ENCODE measurements at regions of chr10 and their contacts with region 1.

Region 1: GRCh38 chr10:100433253-100434240 is 29.3 kb upstream of the WNT8B start:
- DNase-seq: peak; percentile 74 to 94
- ATAC-seq: peak; percentile 92 to 98
- H3K4me3 ChIP-seq: no peak overlapping the region
- H3K27ac ChIP-seq: peak overlapping the region in 1 of 2 experiments; percentile 9; a peak in 4 of 6 replicates
- H3K4me1 ChIP-seq: peaks cover 32% of the 10 kb centered on the region
- CTCF ChIP-seq: peak; percentile 100
- EP300 ChIP-seq: no peak
- POLR2A ChIP-seq: no peak
- RAD21 ChIP-seq: peak; percentile 100

Region 2: DNA sequence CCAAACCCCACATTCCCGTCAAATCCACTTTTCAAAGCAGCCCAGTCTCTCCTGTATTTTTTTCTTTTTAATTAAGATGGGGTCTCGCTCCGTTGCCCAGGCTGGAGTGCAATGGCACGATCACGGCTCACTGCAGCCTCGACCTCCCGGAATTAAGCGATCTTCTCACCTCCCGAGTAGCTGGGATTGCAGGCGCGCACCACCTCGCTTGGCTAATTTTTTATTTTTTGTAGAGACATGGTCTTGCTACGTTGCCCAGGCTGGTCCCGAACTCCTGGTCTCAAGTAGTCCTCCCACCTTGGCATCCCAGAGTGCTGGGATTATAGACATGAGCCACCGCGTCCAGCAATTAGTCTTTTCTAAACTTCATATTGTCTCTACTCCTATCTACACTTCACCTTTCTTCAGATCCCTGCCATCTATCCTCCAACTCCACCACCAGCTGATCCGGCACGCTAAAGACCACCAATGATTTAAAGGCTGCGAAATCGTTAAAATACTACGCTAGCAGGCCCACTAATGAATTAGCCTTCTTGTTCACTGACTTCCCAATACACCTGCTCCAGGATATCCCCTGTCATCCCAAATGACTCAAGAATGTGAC is 203.6 kb before region 1 on chr10:
- CTCF ChIA-PET with region 1: no interaction called
- POLR2A ChIA-PET with region 1: no interaction called
- DNase-seq: no peak
- ATAC-seq: no peak; a peak in 1 of 6 replicates
- H3K4me3 ChIP-seq: peak overlapping the region; percentile 91
- H3K27ac ChIP-seq: peak overlapping the region; percentile 88 to 93
- H3K4me1 ChIP-seq: peaks cover 14% of the 10 kb centered on the region; the same call in 2 of the 3 replicates
- CTCF ChIP-seq: no peak
- EP300 ChIP-seq: no peak
- POLR2A ChIP-seq: no peak
- RAD21 ChIP-seq: no peak

Region 3: DNA sequence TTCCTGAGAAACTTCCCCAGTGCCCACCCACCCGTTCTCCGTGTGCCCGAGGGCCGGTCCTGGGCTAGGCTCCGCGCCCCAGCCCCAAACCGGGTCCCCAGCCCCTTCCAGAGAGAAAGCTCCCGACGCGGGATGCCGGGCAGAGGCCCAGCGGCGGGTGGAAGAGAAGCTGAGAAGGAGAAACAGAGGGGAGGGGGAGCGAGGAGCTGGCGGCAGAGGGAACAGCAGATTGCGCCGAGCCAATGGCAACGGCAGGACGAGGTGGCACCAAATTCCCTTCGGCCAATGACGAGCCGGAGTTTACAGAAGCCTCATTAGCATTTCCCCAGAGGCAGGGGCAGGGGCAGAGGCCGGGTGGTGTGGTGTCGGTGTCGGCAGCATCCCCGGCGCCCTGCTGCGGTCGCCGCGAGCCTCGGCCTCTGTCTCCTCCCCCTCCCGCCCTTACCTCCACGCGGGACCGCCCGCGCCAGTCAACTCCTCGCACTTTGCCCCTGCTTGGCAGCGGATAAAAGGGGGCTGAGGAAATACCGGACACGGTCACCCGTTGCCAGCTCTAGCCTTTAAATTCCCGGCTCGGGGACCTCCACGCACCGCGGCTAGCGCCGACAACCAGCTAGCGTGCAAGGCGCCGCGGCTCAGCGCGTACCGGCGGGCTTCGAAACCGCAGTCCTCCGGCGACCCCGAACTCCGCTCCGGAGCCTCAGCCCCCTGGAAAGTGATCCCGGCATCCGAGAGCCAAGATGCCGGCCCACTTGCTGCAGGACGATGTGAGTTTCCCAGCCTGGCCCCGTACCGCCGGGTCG is 86.6 kb before region 1 on chr10 and contains the start of gene SCD:
- CTCF ChIA-PET with region 1: interaction called, 534 read pairs
- POLR2A ChIA-PET with region 1: interaction called, 11 read pairs
- DNase-seq: peak; percentile 93 to 98
- ATAC-seq: peak; percentile 91 to 93
- H3K4me3 ChIP-seq: peak within 1 kb of the TSS; percentile 99
- H3K27ac ChIP-seq: peak within 1 kb of the TSS; percentile 99
- H3K4me1 ChIP-seq: peaks cover 60% of the 10 kb centered on the region
- CTCF ChIP-seq: no peak
- EP300 ChIP-seq: peak in 1 of 2 experiments; percentile 18; a peak in 1 of 5 replicates
- POLR2A ChIP-seq: peak; percentile 71
- RAD21 ChIP-seq: 0 out of 5 replicates have a peak, but pooled peaks have one; percentile 1 to 8
- polyA plus RNA-seq, gene SCD: 329 and 348 TPM in 2 replicates

Region 4: DNA sequence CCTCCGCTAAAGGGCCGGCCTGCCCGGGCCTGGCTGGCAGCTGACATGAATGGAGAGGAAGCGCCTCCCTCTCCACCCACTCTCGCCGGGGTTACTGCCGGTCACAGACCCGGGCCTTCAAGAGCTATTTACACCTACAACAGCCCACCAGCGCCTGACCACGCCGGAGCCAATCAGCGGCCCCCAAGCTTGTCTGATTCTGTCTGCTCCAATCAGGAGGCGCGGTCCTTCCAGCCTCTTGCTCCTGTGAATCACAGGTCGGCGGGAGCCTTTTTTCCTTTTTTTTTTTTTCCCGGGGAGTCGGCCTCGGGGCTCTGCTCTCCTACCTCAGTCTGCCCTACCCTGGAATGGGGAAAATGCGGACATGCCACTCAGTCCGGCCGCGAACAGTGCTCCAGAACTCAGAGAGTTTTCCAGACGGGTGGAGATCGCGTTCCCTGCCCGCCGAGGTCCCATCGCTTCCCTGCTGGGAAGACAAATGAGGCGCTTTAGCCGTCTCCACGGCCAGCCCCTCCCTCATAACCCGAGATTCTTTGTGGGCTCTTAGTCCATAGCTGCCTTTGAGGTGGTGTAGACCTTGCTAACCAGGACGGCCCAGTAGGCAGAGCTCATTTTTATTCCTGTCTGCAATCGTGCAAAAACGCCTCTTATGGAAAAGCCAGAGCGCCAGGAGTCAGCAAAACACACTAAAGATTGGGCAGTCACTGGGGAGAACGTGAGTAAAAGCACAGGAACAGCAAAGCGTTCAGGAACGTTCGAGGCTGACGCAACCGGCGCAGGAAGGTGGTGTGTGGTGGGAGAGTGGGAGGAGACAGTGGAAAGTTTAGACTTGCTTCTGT is 60.0 kb before region 1 on chr10:
- CTCF ChIA-PET with region 1: interaction called, 24 read pairs
- POLR2A ChIA-PET with region 1: interaction called, 10 read pairs
- DNase-seq: peak; percentile 99 to 100
- ATAC-seq: peak; percentile 88 to 92
- H3K4me3 ChIP-seq: peak overlapping the region; percentile 43
- H3K27ac ChIP-seq: peak overlapping the region; percentile 97 to 98
- H3K4me1 ChIP-seq: peaks cover 61% of the 10 kb centered on the region
- CTCF ChIP-seq: no peak
- EP300 ChIP-seq: peak in 1 of 2 experiments; percentile 30; a peak in 1 of 5 replicates
- POLR2A ChIP-seq: peak; percentile 45
- RAD21 ChIP-seq: peak in 1 of 2 experiments; percentile 53; a peak in 2 of 5 replicates

Region 5: DNA sequence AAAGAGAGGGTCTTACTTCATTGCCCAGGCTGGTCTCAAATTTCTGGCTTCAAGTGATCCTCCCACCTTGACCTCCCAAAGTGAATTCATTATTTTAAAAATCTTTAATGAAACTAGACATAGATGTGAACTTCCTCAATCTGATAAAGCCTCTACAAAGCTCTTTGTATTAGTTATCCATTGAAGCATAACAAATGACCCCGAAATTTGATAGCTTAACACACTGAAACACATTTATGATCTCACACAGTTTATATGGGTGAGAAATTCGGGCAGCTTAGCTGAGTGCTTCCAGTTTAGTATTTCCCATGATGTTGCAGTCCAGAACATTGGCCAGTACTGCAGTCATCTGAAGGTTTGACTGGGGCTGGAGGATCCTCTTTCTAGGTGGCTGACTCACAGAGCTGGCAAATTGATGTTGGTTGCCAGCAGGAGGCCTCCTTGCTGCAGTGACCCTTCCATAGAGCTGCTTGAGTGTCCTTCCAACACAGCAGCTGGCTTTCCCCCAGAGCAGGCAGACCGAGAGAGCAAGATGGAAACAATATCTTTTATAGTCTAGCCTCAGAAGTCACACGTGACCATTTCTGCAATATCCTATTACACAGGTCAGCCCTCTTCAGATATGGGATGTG is 12.7 kb after region 1 on chr10:
- CTCF ChIA-PET with region 1: interaction called, 28 read pairs
- POLR2A ChIA-PET with region 1: no interaction called
- DNase-seq: peak in 1 of 2 experiments; percentile 32
- ATAC-seq: peak; percentile 54 to 64; a peak in 5 of 6 replicates
- H3K4me3 ChIP-seq: no peak overlapping the region
- H3K27ac ChIP-seq: no peak overlapping the region
- H3K4me1 ChIP-seq: no peaks in the 10 kb centered on the region
- CTCF ChIP-seq: no peak
- EP300 ChIP-seq: no peak
- POLR2A ChIP-seq: no peak
- RAD21 ChIP-seq: 0 out of 5 replicates have a peak, but pooled peaks of 1 of the 2 experiments have one; percentile 14

Region 6: GRCh38 chr10:100481462-100482081 is 48.0 kb after region 1 on chr10:
- CTCF ChIA-PET with region 1: interaction called, 40 read pairs
- POLR2A ChIA-PET with region 1: no interaction called
- DNase-seq: peak; percentile 89 to 92
- ATAC-seq: peak; percentile 94 to 97
- H3K4me3 ChIP-seq: peak overlapping the region; percentile 44
- H3K27ac ChIP-seq: no peak overlapping the region
- H3K4me1 ChIP-seq: 0 out of 3 replicates have a peak, but pooled peaks cover 3% of the 10 kb centered on the region
- CTCF ChIP-seq: no peak
- EP300 ChIP-seq: no peak
- POLR2A ChIP-seq: no peak
- RAD21 ChIP-seq: no peak

Region 7: DNA sequence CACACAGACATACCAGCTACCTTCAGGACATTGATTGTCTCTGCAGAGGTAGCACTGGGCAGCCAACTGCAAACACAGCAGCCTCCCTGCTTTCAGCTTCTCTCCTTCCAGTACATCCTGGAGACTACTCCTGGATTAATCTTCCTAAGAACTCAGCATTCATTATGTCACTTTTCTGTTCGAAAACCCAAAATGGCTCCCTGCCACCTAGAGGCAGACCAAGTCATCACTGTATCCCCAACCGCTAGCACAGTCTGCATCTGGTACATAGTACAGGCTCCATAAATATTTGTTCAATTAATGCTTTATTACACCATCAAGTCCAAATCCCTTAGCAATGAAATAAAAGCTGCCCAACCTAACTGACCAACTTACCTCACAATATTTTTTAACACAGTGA is 91.1 kb after region 1 on chr10:
- CTCF ChIA-PET with region 1: interaction called, 267 read pairs
- POLR2A ChIA-PET with region 1: no interaction called
- DNase-seq: no peak
- ATAC-seq: peak; percentile 24 to 48; a peak in 1 of 6 replicates
- H3K4me3 ChIP-seq: no peak overlapping the region
- H3K27ac ChIP-seq: no peak overlapping the region
- H3K4me1 ChIP-seq: peaks cover 7% of the 10 kb centered on the region; the same call in 2 of the 3 replicates
- CTCF ChIP-seq: no peak
- EP300 ChIP-seq: no peak
- POLR2A ChIP-seq: no peak
- RAD21 ChIP-seq: no peak

Region 8: DNA sequence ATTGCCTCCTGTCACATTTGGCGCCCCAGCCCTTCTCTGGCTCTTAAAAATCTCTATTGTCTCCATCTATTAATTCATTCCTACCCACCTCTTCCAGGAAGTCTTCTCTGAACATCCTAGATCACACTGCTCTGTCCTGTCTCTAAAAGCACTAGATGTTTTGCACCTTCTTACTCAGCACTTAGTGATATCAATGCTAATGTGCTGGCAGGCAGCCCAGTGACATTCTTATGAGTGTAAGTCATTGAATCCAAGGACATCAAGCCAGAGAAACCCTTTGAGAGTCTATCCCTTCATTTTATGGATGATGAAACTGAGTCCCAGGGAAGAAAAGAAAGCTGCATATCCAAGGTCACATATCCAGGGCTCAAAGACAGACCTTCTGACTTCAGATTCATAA is 263.5 kb after region 1 on chr10:
- CTCF ChIA-PET with region 1: no interaction called
- POLR2A ChIA-PET with region 1: no interaction called
- DNase-seq: peak; percentile 58 to 78
- ATAC-seq: peak; percentile 85 to 88
- H3K4me3 ChIP-seq: no peak overlapping the region
- H3K27ac ChIP-seq: peak overlapping the region; percentile 40 to 73
- H3K4me1 ChIP-seq: peaks cover 20% of the 10 kb centered on the region
- CTCF ChIP-seq: no peak
- EP300 ChIP-seq: no peak
- POLR2A ChIP-seq: no peak
- RAD21 ChIP-seq: no peak

Region 9: DNA sequence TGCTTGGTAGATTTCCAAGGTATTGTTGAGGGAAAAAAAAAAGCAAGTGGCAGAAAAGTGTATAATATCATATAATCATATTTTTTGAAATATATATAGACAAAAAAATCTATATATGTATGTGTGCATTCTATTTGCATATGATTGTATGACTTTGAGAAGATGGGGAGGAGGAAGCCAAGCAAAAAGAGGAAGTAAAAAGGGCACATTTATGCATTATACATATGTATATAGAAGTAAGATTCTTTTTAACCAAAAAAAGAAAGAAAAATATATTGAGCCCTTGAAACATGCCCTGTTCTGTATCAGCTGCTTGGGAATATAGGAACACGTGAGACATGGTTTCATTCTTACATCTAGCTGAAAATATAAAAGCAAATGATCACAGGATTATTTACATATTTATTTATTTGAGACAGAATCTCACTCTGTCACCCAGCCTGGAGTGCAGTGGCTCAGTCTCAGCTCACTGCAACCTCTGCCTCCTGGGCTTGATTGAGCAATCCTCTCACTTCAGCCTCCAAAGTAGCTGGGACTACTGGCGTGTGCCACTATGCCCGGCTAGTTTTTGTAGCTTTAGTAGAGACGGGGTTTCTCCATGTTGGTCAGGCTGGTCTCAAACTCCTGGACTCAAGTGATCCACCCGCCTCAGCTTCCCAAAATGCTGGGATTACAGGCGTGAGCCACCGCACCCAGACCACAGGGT is 461.2 kb after region 1 on chr10:
- CTCF ChIA-PET with region 1: no interaction called
- POLR2A ChIA-PET with region 1: no interaction called
- DNase-seq: no peak
- ATAC-seq: no peak
- H3K4me3 ChIP-seq: no peak overlapping the region
- H3K27ac ChIP-seq: peak overlapping the region in 1 of 2 experiments; percentile 52; a peak in 3 of 6 replicates
- H3K4me1 ChIP-seq: peaks cover 36% of the 10 kb centered on the region
- CTCF ChIP-seq: no peak
- EP300 ChIP-seq: no peak
- POLR2A ChIP-seq: no peak
- RAD21 ChIP-seq: no peak

Measured in A549 (cell line).